Right ventricle myocardium superior (tissue), 1 donor: ENCODE measurements at regions of chr1 and their contacts with region 1.

Region 1: DNA sequence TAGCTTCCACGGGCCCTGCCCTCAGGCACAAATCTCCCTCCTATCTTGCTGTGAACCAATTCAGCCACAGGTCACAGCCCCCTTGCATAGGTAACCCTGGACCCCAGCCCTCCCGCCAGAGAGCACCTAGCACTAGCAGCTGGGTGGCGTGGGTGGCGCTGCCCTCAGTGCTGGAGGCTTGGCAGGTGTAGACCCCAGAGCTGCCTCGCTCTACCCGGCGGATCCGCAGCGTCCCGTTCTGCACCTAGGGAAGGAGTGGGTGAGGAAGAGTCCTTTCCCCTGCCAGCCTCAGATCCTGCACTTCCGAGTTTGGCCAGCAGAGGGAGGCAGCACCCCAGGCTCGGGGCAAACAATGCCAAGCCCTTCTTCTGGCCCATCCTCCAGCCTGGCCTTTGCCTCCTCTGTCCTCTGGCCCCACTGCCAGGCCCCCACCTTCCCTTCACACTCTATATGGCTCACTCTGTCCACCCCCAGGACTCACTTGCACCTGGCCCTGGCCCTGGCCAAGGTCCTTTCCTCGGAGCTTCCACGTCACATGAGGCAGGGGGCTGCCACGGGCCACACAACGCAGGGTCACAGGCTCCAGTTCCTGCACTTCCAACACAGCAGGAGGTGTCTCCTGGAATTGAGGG is 9.0 kb downstream of the IGSF9 start:
- DNase-seq: peak; percentile 80
- ATAC-seq: peak; percentile 85

Region 2: GRCh38 chr1:160006312-160006940 is 70.0 kb after region 1 on chr1:
- intact Hi-C with region 1: loop called (anchors 2 kb)
- DNase-seq: peak; percentile 84
- ATAC-seq: peak; percentile 88

Region 3: DNA sequence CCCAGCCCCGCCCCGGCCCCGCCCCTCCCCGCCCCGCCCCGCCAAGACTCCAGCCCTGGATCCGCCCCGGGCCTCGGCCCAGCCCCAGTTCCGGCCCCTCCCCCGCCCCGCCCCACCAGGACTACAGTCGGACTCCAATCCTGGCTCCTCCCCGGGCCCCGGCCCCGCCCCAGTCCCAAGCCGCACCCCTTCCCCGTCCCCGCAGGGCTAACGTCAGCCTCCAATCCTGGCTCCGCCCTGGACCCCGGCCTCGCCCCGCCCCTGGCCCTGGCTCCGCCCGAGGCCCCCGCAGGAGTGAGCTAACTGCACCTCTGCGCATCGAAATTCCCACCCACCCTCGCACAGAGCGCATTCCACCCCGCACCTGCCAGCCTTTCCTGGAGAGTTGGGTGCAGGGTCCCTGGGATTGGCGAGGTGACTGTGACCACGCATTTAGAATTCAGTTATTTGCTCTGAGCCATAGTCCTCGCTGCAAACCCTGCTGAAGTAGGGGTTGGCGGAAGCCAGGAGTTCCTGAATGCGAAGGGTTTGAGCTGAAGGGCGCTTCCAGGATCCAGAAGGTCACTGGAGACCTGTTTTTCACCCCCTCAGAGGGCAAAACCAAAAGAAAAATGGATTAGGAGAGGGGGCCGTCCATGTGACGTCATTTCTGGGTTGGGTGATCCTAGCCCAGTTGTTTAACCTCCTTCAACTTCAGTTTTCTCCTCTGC is 162.6 kb after region 1 on chr1:
- intact Hi-C with region 1: no loop called
- DNase-seq: peak; percentile 98
- ATAC-seq: peak; percentile 88

Region 4: DNA sequence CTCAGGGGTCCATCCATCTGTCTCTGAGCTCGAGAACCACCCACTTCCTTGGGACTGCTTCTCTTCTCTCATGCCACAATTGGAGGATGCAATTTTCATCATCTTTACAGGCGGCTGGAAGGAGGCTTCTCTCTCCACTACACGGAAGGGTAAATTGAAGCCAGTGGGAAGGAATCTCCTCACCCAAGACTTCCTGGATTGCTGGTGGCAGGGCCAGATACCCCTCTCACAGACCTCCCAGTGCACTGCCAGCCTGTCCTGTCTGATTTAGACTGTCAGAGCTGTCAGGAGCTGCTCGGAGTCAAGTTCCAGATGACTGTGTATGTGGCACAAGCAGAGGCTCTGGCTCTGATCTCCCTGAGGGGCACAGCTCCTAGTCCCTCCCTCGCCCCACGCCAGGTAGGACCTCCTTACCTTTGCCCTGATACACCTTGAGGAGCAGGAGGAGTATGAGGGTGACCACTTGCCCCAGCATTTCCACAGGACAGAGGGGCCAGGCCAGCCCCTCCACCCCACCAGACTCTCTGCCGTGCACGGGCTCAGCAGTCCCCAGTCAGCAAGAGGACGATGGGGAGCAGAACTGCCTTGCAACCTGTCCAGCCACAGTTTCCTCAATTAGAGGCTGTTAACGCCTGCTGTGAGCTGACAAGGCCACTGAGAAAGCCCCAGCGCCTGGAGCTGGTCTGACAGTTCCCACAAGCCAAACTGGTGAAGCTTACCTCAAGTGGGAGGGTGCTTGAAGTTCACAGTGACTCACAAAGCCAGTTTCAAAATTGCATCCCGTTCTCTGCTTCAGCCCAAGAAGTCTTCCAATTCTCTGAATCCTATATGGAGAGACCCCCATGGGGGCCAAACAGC is 926.0 kb after region 1 on chr1 and contains the start of gene CD244:
- intact Hi-C with region 1: no loop called
- DNase-seq: peak; percentile 66
- ATAC-seq: peak; percentile 51
- total RNA-seq, gene CD244: 0.48 TPM